Mammary epithelial cell (primary cell): ENCODE measurements at regions of chr14 and their contacts with region 1.

Region 1: GRCh38 chr14:55556929-55557623 is 22.9 kb upstream of the KTN1 start:
- DNase-seq: peak; percentile 91
- H3K4me3 ChIP-seq: no peak overlapping the region
- H3K27ac ChIP-seq: no peak overlapping the region
- H3K4me1 ChIP-seq: peaks cover 19% of the 10 kb centered on the region
- H3K27me3 ChIP-seq: no peaks in the 10 kb centered on the region
- CTCF ChIP-seq: no peak

Region 2: DNA sequence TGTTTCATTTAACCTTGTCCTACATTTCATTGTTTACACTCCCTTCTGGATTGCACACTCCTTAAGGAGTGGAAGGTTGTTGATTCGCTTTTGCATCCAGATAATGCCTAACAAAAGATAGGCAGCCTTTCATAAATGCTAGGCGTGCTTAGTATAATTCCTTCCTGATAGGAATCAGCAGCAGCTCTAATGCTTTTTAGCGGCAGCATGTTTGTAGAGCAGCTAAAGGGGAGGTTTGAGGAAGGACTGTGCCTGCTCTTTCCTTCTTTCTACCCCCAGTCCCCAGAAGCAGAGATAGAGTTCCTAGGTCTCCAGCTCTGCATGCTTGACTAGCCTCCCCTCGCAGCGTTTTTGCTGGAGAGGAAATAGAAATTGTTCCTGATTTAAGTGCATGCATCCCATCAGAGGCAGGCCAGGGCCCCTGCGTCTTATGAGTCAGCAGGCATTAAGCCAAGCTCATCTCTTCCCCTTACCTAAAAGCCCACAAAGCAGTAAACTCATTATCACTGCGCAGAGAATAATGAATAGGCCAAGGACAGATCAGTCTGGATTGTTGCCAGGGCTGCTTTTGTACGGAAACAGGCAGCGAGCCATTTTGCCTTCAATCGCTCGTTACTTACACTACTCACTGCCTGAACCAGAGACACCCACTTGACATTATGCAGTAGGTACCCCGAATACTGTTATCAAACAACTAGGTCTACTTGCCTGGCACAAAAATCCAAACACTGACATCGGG is 102.6 kb before region 1 on chr14:
- CTCF ChIA-PET with region 1: no interaction called
- dilution Hi-C with region 1: no loop called
- in situ Hi-C with region 1: loop called in 1 of 2 experiments (anchors 25 kb)
- intact Hi-C with region 1: no loop called
- DNase-seq: peak; percentile 71
- H3K4me3 ChIP-seq: no peak overlapping the region
- H3K27ac ChIP-seq: no peak overlapping the region
- H3K4me1 ChIP-seq: peaks cover 38% of the 10 kb centered on the region
- H3K27me3 ChIP-seq: no peaks in the 10 kb centered on the region
- CTCF ChIP-seq: no peak